ENCODE measurements at regions of chr10 and their contacts with region 1.

Region 1: GRCh38 chr10:98404571-98405359 is 10.2 kb downstream of the PYROXD2 start:
- DNase-seq: peak; percentile 46
- H3K4me3 Mint-ChIP-seq: peak overlapping the region; percentile 30
- H3K27ac Mint-ChIP-seq: peak overlapping the region; percentile 34
- H3K4me1 Mint-ChIP-seq: peaks cover 16% of the 10 kb centered on the region
- H3K27me3 Mint-ChIP-seq: no peaks in the 10 kb centered on the region

Region 2: DNA sequence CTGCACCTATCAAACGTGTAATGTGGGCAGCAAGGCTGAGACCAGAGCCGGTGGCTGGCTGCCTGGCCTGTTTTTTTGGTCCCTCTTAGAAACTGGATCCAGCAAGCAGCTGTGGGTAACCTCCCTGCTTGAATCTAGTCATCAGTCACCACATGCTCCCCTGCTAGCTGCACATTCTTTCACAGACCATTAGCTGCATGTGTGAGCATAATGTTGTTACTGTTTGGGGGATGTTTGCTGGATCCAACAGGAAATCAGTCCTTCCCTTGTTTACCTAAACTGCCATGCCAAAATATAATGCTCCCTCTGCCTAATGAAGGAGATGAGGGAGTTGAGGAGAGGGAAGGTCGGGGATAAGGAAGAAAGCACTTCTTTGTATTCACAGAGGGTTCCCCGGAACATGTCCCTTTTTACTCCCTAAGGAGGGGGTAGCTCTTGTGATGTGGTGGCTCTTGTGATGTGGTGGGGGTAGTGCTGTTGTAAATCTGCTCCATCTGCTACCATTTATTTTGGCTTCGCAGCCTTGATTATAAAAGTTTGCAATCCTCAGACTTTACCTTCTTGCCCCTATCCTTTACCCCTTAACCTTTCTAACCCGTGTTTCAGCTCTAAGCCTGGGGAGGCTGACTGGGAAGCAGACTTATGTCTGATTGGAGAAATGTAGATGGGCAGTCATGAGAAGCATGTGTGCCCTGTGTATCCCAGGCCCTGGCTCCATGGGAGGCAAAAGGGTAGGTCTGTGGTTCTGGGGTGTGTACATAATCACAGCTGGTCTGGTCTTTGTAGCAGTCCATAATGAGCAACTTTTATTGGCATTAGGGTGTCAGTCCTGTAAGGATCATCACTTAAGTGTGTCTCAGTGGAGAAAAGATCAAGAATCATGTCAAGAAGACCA is 157.6 kb before region 1 on chr10:
- CTCF ChIA-PET with region 1: no interaction called
- intact Hi-C with region 1: no loop called
- DNase-seq: no peak
- H3K4me3 Mint-ChIP-seq: no peak overlapping the region
- H3K27ac Mint-ChIP-seq: no peak overlapping the region
- H3K4me1 Mint-ChIP-seq: no peaks in the 10 kb centered on the region
- H3K27me3 Mint-ChIP-seq: no peaks in the 10 kb centered on the region

Region 3: DNA sequence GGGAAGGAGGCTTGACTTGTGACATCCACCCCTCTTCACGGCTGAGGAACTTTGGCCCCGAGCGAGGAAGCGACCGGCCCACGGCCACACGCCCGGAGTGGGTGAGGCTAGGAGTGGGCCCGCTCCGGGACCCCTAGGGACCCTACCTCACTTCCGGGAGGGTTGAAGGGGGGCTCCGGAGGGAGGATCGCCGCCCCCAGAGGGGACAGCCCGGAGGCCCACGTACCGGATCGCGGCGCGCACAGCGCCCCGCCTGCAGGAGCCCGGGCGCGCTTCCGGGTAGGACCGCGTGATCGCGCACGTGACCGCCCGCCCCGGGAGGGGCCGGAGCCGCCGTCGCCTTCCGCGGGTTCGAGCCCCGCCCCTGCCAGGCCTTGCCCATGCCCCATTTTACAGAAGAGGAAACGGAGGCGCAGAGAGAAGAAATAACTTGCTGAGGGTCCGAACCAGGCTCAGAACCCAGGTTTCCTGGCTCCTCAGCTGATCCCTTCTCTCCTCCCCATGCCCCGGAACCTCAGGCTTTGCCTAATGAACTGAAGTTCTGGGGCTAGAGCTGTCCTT is 42.0 kb after region 1 on chr10 and contains the start of gene HPS1:
- CTCF ChIA-PET with region 1: no interaction called
- intact Hi-C with region 1: loop called (anchors 1 kb)
- DNase-seq: peak; percentile 86
- H3K4me3 Mint-ChIP-seq: peak within 1 kb of the TSS; percentile 88
- H3K27ac Mint-ChIP-seq: peak within 1 kb of the TSS; percentile 84
- H3K4me1 Mint-ChIP-seq: peaks cover 40% of the 10 kb centered on the region
- H3K27me3 Mint-ChIP-seq: peaks cover 3% of the 10 kb centered on the region
- total RNA-seq, gene HPS1: 28.1 to 31.0 TPM

Measured in activated naive CD4-positive, alpha-beta T cell treated with anti-CD3 and anti-CD28 coated beads for 36 hours (primary cell).